ENCODE measurements at regions of chr21 and their contacts with region 1.

Region 1: GRCh38 chr21:46458315-46459023 is at the start of gene DIP2A:
- DNase-seq: peak; percentile 95
- H3K4me3 Mint-ChIP-seq: peak within 1 kb of the TSS; percentile 91
- H3K27ac Mint-ChIP-seq: peak within 1 kb of the TSS; percentile 91
- H3K4me1 Mint-ChIP-seq: peaks cover 43% of the 10 kb centered on the region
- H3K27me3 Mint-ChIP-seq: no peaks in the 10 kb centered on the region
- total RNA-seq, gene DIP2A: 33.5 and 33.6 TPM in 2 replicates

Region 2: DNA sequence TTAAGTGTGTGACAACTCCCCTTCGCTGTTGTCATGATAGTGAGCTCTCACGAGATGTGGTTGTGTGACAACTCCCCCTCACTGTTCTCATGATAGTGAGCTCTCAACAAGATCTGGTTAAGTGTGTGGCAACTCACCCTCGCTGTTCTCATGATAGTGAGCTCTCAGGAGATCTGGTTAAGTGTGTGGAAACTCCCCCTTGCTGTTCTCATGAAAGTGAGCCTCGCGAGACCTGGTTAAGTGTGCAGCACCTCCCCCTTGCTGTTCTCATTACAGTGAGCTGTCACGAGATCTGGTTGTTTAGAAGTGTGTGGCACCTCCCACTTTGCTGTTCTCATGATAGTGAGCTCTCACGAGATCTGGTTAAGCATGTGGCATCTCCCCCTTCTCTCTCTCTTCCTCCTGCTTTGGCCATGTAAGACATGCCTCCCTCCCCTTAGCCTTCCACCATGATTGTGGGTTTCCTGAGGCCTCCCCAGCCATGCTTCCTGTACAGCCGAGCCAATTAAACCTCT is 204.8 kb before region 1 on chr21:
- intact Hi-C with region 1: loop called (anchors 1 kb)
- DNase-seq: peak; percentile 62
- H3K4me3 Mint-ChIP-seq: peak overlapping the region; percentile 62
- H3K27ac Mint-ChIP-seq: peak overlapping the region; percentile 95
- H3K4me1 Mint-ChIP-seq: peaks cover 43% of the 10 kb centered on the region
- H3K27me3 Mint-ChIP-seq: no peaks in the 10 kb centered on the region

Region 3: GRCh38 chr21:46285761-46286496 is 172.5 kb before region 1 on chr21 and contains the start of gene YBEY:
- intact Hi-C with region 1: loop called (anchors 1 kb)
- DNase-seq: peak; percentile 86
- H3K4me3 Mint-ChIP-seq: peak within 1 kb of the TSS; percentile 100
- H3K27ac Mint-ChIP-seq: peak within 1 kb of the TSS; percentile 99
- H3K4me1 Mint-ChIP-seq: peaks cover 45% of the 10 kb centered on the region
- H3K27me3 Mint-ChIP-seq: no peaks in the 10 kb centered on the region
- total RNA-seq, gene YBEY: 16.7 and 17.6 TPM in 2 replicates

Region 4: GRCh38 chr21:46559291-46559983 is 101.0 kb after region 1 on chr21:
- intact Hi-C with region 1: loop called (anchors 2 kb)
- DNase-seq: peak; percentile 47
- H3K4me3 Mint-ChIP-seq: peak overlapping the region; percentile 73
- H3K27ac Mint-ChIP-seq: peak overlapping the region; percentile 95
- H3K4me1 Mint-ChIP-seq: peaks cover 40% of the 10 kb centered on the region
- H3K27me3 Mint-ChIP-seq: no peaks in the 10 kb centered on the region

Region 5: GRCh38 chr21:46635324-46636172 is 177.1 kb after region 1 on chr21 and contains the start of gene PRMT2:
- intact Hi-C with region 1: loop called (anchors 1 kb)
- DNase-seq: peak; percentile 98
- H3K4me3 Mint-ChIP-seq: peak within 1 kb of the TSS; percentile 93
- H3K27ac Mint-ChIP-seq: peak within 1 kb of the TSS; percentile 90
- H3K4me1 Mint-ChIP-seq: peaks cover 69% of the 10 kb centered on the region
- H3K27me3 Mint-ChIP-seq: peaks cover 8% of the 10 kb centered on the region
- total RNA-seq, gene PRMT2: 55.7 and 58.7 TPM in 2 replicates

Measured in activated T-helper 1 cell treated with anti-CD3 and anti-CD28 coated beads, Interleukin-12 subunit alpha, Interleukin-12 subunit beta, Interleukin-2, Interleukin-4 antibody, amounts not matched to agents 30 ng/mL and 10 ng/mL and 1 ng/mL, durations not matched to agents 14 hours and 24 hours and 36 hours (primary cell).